Mammary epithelial cell (primary cell): ENCODE measurements at regions of chr7 and their contacts with region 1.

Region 1: DNA sequence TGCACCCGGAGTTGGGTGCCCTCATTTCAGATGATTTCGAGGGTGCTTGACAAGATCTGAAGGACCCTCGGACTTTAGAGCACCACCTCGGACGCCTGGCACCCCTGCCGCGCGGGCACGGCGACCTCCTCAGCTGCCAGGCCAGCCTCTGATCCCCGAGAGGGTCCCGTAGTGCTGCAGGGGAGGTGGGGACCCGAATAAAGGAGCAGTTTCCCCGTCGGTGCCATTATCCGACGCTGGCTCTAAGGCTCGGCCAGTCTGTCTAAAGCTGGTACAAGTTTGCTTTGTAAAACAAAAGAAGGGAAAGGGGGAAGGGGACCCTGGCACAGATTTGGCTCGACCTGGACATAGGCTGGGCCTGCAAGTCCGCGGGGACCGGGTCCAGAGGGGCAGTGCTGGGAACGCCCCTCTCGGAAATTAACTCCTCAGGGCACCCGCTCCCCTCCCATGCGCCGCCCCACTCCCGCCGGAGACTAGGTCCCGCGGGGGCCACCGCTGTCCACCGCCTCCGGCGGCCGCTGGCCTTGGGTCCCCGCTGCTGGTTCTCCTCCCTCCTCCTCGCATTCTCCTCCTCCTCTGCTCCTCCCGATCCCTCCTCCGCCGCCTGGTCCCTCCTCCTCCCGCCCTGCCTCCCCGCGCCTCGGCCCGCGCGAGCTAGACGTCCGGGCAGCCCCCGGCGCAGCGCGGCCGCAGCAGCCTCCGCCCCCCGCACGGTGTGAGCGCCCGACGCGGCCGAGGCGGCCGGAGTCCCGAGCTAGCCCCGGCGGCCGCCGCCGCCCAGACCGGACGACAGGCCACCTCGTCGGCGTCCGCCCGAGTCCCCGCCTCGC is at the start of gene EGFR:
- DNase-seq: peak; percentile 80
- H3K4me3 ChIP-seq: peak within 1 kb of the TSS; percentile 62 to 83 (median 67)
- H3K27ac ChIP-seq: peak within 1 kb of the TSS; percentile 85
- H3K4me1 ChIP-seq: peaks cover 34% of the 10 kb centered on the region
- H3K27me3 ChIP-seq: no peaks in the 10 kb centered on the region
- CTCF ChIP-seq: no peak
- total RNA-seq, gene EGFR: 304 to 534 TPM

Region 2: GRCh38 chr7:54788664-54789063 is 229.9 kb before region 1 on chr7:
- CTCF ChIA-PET with region 1: interaction called, 7 read pairs
- dilution Hi-C with region 1: no loop called
- in situ Hi-C with region 1: no loop called
- intact Hi-C with region 1: loop called (anchors 1 kb)
- DNase-seq: peak; percentile 87
- H3K4me3 ChIP-seq: no peak overlapping the region
- H3K27ac ChIP-seq: peak overlapping the region; percentile 43
- H3K4me1 ChIP-seq: peaks cover 22% of the 10 kb centered on the region
- H3K27me3 ChIP-seq: no peaks in the 10 kb centered on the region
- CTCF ChIP-seq: peak; percentile 75 to 83

Region 3: DNA sequence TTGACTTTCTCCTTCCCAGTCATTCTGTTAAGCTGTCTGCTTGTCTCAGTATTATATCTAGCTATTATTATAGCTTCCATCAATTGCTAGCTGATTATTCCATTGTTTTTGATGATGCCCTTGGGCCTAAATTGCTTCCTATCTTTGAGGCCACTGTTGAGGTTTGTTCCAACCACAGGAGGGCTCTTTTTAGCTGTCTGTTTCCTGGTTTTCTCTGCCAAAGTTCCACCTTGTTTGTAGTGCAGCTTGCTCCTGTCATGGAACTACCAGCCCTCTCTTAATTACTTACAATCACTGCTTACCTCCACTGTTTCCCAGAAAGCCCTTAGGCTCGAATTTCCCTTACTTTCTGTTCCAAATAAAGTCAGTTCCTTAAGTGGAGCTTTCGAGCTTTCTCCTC is 140.9 kb before region 1 on chr7:
- CTCF ChIA-PET with region 1: no interaction called
- dilution Hi-C with region 1: no loop called
- in situ Hi-C with region 1: no loop called
- intact Hi-C with region 1: loop called (anchors 1 kb)
- DNase-seq: peak; percentile 40
- H3K4me3 ChIP-seq: no peak overlapping the region
- H3K27ac ChIP-seq: no peak overlapping the region
- H3K4me1 ChIP-seq: peaks cover 11% of the 10 kb centered on the region
- H3K27me3 ChIP-seq: no peaks in the 10 kb centered on the region
- CTCF ChIP-seq: peak in 1 of 2 donors; percentile 61

Region 4: DNA sequence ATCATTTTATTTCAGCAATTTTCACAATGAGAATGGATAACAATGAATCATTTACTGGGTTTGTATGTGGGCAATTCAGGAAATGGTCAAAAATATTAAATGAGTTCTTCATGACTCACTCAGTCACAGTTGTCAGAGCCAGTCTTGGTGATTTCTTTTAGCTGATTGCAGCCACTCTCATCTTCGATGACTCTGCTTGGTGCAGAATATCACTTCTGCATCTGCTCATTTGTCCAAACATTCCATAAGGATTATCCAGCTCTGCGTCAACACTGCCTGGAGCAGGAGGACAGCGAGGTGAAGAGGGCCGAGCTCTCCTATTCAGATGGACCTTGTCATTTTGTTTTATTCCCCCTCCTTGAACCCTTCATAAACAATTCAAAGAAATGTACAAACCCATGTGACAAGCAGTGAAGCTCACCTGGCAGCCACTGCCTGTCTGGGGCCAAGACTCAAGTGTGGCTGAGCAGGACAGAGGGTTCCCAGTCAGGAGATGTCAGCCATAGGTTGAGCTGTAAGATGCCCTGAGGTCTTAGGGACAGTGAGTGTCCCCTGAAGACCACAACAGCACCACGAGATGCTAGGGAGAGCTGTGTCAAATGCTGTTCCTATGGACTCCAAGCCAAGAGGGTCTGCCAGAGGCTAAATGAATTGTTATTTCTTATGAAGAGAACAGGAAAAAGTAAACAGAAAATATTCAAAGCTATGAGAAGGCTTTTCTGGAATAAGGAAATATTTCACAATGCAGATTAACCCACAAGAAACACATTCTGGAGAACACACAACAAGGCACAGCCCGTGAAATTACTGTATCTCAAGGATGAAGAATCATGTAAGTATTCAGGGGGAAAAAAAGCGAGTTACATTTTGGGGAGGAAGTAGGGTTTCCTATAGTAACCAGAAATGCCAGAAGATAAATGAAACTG is 32.9 kb before region 1 on chr7:
- CTCF ChIA-PET with region 1: interaction called, 3 read pairs
- dilution Hi-C with region 1: no loop called
- in situ Hi-C with region 1: no loop called
- intact Hi-C with region 1: loop called (anchors 1 kb)
- DNase-seq: peak; percentile 93
- H3K4me3 ChIP-seq: peak overlapping the region in 2 of 3 experiments; percentile 1 to 25
- H3K27ac ChIP-seq: peak overlapping the region; percentile 96
- H3K4me1 ChIP-seq: peaks cover 31% of the 10 kb centered on the region
- H3K27me3 ChIP-seq: no peaks in the 10 kb centered on the region
- CTCF ChIP-seq: no peak

Region 5: DNA sequence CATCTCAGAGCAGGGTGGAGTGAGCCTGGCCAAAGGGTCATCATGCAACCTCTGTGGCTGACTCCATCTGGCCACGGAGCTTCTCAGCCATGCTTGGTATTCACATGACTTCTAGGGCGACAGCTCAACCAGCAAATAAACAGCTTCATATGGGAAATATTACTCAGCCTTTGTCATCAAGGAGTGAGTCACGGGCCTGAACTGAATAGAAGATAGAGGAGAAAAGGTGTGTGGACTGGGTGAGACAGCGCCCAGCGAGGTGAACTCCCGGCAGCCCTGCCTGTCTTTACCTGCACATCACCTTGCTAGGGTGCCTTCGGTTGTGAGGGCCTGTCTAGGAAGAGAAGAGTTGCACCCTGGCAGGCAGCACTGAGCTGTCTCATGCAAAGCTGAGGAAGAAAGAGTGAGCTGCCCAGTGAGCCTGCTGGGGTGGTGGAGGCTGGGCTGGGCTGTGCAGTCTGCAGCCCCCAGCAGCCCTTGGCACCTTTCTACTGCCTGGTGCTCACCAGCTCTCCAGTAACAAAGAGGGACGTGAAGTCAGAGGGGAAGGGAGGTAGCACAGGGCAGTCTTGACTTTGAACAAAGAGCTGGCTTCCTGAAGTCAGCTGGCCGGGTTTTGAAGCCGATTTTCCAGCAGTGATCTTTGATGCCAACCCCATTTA is 114.4 kb after region 1 on chr7:
- CTCF ChIA-PET with region 1: no interaction called
- dilution Hi-C with region 1: no loop called
- in situ Hi-C with region 1: no loop called
- intact Hi-C with region 1: loop called (anchors 5 kb)
- DNase-seq: peak; percentile 100
- H3K4me3 ChIP-seq: peak overlapping the region in 1 of 3 experiments; percentile 27
- H3K27ac ChIP-seq: peak overlapping the region; percentile 97
- H3K4me1 ChIP-seq: peaks cover 79% of the 10 kb centered on the region
- H3K27me3 ChIP-seq: no peaks in the 10 kb centered on the region
- CTCF ChIP-seq: peak in 1 of 2 donors; percentile 14

Region 6: GRCh38 chr7:55457801-55458200 is 439.2 kb after region 1 on chr7:
- CTCF ChIA-PET with region 1: no interaction called
- dilution Hi-C with region 1: no loop called
- in situ Hi-C with region 1: no loop called
- intact Hi-C with region 1: no loop called
- DNase-seq: no peak
- H3K4me3 ChIP-seq: no peak overlapping the region
- H3K27ac ChIP-seq: no peak overlapping the region
- H3K4me1 ChIP-seq: no peaks in the 10 kb centered on the region
- H3K27me3 ChIP-seq: no peaks in the 10 kb centered on the region
- CTCF ChIP-seq: no peak